Activated CD4-positive, alpha-beta memory T cell treated with anti-CD3 and anti-CD28 coated beads for 36 hours (primary cell): ENCODE measurements at regions of chr20 and their contacts with region 1.

Region 1: DNA sequence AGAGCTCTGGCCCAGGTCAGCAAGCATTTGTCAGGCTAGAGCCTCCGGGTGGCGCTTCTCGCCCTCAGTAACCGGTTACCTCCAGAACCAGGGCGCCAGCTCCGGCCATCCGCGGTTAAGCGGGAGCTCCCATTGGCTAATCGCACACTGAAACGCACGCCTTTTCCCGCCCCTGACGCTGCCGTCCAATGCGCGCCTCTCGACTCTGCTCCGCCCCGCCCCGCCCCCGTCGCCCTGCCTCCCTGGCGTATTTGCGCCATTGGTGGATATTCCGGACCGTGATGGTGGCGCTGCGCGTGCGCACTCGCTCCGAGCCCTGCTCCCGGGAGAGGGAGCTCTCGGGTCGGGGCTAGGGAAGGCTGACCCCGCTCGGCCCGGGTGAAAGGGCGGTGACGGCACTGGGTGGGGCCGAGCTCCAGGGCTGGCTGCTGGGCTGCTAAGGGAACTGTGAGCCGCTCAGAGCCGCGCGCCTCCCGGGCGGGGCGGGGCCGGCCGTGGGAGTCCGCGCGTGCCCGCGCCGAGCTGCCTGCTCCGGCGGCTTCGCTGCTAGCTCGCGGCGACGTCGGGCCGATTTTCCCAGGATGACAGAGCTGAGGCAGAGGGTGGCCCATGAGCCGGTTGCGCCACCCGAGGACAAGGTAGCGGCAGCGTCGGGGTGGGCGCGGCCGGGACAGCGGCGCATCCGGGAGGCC is at the start of gene CDS2:
- DNase-seq: peak; percentile 100
- H3K4me3 Mint-ChIP-seq: peak within 1 kb of the TSS; percentile 86
- H3K27ac Mint-ChIP-seq: peak within 1 kb of the TSS; percentile 90
- H3K4me1 Mint-ChIP-seq: peaks cover 32% of the 10 kb centered on the region
- H3K27me3 Mint-ChIP-seq: no peaks in the 10 kb centered on the region
- total RNA-seq, gene CDS2: 46.5 to 47.4 TPM

Region 2: DNA sequence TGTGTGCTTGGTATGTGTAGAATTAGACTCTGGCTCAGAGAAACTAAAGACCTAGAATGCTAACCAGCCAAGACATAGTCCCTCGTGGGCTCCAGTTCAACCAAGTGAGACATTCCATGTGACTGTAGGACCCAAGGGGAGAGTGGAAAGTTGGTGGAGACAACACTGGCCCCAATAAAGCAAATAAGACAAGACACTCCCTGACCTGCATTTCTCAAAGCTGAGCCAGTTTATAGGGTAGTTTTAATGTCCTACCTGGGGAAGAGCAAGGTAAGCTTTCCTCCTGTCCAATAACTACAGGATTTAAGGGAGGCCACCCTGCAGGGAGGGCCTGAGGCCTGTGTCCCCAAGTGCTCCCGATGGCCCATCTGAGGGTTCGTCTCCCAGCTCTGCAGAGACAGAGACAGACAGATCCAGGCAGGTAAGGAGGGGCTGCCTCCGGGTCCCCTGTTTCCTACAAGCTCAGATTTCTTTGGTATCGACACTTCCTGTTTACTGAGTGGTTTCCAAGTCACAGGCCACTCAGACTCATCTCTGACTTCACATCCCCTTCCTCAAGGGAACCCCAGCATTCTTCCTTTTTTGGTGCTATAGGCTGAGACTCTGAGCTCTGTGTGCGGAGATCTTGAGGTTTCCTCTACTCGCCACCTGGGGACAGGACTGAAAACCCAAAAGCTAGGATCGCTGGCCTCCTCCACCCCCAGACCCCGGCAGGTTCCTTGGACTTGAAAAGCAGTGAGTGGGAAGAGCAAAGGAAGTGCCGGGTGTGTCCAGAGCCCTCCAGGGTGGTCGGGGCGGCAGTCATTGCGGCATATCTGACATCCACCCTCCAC is 312.6 kb before region 1 on chr20:
- CTCF ChIA-PET with region 1: interaction called, 3 read pairs
- POLR2A ChIA-PET with region 1: interaction called, 4 read pairs
- intact Hi-C with region 1: loop called (anchors 5 kb)
- DNase-seq: peak; percentile 74
- H3K4me3 Mint-ChIP-seq: peak overlapping the region; percentile 90
- H3K27ac Mint-ChIP-seq: peak overlapping the region; percentile 99
- H3K4me1 Mint-ChIP-seq: peaks cover 74% of the 10 kb centered on the region
- H3K27me3 Mint-ChIP-seq: no peaks in the 10 kb centered on the region

Region 3: GRCh38 chr20:5146871-5147592 is 20.4 kb after region 1 on chr20:
- CTCF ChIA-PET with region 1: interaction called, 11 read pairs
- POLR2A ChIA-PET with region 1: interaction called, 8 read pairs
- intact Hi-C with region 1: loop called (anchors 1 kb)
- DNase-seq: no peak
- H3K4me3 Mint-ChIP-seq: no peak overlapping the region
- H3K27ac Mint-ChIP-seq: no peak overlapping the region
- H3K4me1 Mint-ChIP-seq: peaks cover 65% of the 10 kb centered on the region
- H3K27me3 Mint-ChIP-seq: no peaks in the 10 kb centered on the region

Region 4: GRCh38 chr20:5168651-5169396 is 42.2 kb after region 1 on chr20:
- CTCF ChIA-PET with region 1: interaction called, 22 read pairs
- POLR2A ChIA-PET with region 1: no interaction called
- intact Hi-C with region 1: no loop called
- DNase-seq: no peak
- H3K4me3 Mint-ChIP-seq: no peak overlapping the region
- H3K27ac Mint-ChIP-seq: peak overlapping the region; percentile 25
- H3K4me1 Mint-ChIP-seq: peaks cover 64% of the 10 kb centered on the region
- H3K27me3 Mint-ChIP-seq: no peaks in the 10 kb centered on the region

Region 5: GRCh38 chr20:5205348-5206210 is 78.9 kb after region 1 on chr20:
- CTCF ChIA-PET with region 1: interaction called, 14 read pairs
- POLR2A ChIA-PET with region 1: no interaction called
- intact Hi-C with region 1: no loop called
- DNase-seq: peak; percentile 79
- H3K4me3 Mint-ChIP-seq: no peak overlapping the region
- H3K27ac Mint-ChIP-seq: no peak overlapping the region
- H3K4me1 Mint-ChIP-seq: peaks cover 2% of the 10 kb centered on the region
- H3K27me3 Mint-ChIP-seq: no peaks in the 10 kb centered on the region

Region 6: DNA sequence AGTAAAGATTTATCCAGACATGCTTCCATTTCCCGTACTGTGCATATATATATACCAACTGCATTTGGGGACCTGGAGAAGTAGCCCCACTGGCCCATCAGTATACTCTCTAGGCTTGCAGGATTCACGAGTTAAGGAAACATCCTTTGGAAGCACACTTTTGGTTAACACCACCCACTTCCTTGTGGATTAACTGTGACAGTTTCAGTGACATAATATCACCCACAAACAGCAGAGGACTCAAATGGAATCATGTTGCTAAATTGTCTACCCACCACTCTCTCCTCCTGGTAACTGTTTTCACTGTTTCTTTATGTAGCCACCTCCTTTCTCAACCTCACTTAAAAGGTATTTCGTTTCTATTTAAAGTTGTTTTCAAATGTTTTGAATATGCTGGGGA is 135.1 kb after region 1 on chr20:
- CTCF ChIA-PET with region 1: no interaction called
- POLR2A ChIA-PET with region 1: no interaction called
- intact Hi-C with region 1: no loop called
- DNase-seq: no peak
- H3K4me3 Mint-ChIP-seq: no peak overlapping the region
- H3K27ac Mint-ChIP-seq: no peak overlapping the region
- H3K4me1 Mint-ChIP-seq: no peaks in the 10 kb centered on the region
- H3K27me3 Mint-ChIP-seq: peaks cover 4% of the 10 kb centered on the region

Region 7: GRCh38 chr20:5448449-5449118 is 321.9 kb after region 1 on chr20:
- CTCF ChIA-PET with region 1: interaction called, 17 read pairs
- POLR2A ChIA-PET with region 1: no interaction called
- intact Hi-C with region 1: loop called (anchors 2 kb)
- DNase-seq: peak; percentile 64
- H3K4me3 Mint-ChIP-seq: no peak overlapping the region
- H3K27ac Mint-ChIP-seq: no peak overlapping the region
- H3K4me1 Mint-ChIP-seq: no peaks in the 10 kb centered on the region
- H3K27me3 Mint-ChIP-seq: peaks cover 13% of the 10 kb centered on the region

Region 8: GRCh38 chr20:5844063-5844681 is 717.5 kb after region 1 on chr20:
- CTCF ChIA-PET with region 1: no interaction called
- POLR2A ChIA-PET with region 1: no interaction called
- intact Hi-C with region 1: loop called (anchors 10 kb)
- DNase-seq: peak; percentile 87
- H3K4me3 Mint-ChIP-seq: peak overlapping the region; percentile 53
- H3K27ac Mint-ChIP-seq: peak overlapping the region; percentile 79
- H3K4me1 Mint-ChIP-seq: peaks cover 67% of the 10 kb centered on the region
- H3K27me3 Mint-ChIP-seq: no peaks in the 10 kb centered on the region